Posterior vena cava (tissue), 2 donors: ENCODE measurements at regions of chr2 and their contacts with region 1.

Region 1: DNA sequence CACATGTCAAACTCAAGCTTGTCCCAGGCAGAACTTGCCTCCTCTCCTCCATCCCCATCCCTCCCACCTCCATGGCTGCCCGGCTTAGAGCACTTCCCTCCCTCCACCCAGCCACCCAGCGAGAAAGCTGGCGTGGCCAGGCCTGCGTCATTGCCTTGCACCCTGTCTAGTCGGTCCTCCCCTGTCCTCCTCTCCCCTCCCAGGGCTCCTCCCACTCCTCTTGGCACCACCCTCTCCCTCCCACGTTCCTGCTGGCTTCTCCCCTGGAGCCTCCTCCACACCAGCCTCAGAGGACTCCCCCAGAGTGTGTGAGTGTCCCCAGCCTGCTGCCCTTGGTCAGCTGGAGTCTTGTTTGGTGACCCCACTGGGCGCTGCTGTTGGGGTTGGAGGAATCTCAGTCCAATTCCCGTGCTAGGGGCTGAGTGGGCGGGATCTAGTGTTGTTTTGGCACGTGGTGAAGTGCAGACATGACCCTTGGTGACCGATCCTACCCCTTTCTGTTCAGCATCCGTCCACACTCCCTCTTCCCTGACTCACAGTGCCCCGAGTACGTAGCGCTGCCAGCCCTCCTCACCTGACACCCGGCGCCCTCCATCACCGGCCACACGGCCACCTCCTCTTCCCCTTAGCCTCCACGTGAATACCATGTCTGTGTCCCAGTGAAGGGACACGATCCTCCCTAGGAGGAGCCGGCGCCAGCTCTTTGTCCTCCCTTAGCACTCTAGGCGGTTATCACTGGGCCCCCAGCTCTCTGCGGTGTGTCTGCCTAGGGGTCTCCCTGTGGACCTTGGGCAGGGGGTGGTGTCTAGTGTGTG is 41.4 kb downstream of the ATP6V1C2 start:
- DNase-seq: peak; percentile 71

Region 2: GRCh38 chr2:9525266-9525665 is 1237.6 kb before region 1 on chr2:
- intact Hi-C with region 1: no loop called
- DNase-seq: no peak

Region 3: DNA sequence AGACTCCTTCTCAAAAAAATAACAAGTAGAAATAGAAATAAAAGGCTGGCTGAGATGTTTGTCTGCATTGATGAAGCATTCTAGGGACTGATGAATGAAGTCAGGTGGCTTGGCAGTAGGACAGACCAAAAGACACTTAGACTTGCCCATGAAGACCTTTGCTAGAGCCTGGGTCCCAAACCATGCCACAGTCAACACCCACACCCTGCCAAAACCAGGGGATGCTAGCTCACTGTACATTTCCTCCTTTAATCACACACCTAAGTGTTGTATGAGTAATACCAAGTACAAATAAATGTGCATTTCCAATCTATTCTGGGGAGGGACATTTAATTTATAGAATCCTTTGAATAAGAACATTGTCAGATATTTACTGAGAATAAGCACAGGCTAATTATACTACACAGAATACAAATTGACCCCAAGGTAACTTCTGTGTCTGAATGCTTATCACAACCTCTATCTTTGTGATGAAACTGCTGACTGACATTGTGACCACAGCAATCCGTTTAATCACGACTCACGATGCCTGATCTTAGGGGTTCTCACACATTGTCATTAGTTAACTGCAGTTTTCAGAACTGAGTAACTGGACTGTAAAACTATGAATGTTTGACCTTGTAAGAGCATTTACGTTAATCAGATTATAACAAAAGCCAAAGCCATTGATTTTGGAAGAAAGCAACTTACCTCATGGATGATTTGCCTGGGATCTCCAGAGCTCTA is 62.6 kb before region 1 on chr2:
- intact Hi-C with region 1: no loop called
- DNase-seq: no peak

Region 4: DNA sequence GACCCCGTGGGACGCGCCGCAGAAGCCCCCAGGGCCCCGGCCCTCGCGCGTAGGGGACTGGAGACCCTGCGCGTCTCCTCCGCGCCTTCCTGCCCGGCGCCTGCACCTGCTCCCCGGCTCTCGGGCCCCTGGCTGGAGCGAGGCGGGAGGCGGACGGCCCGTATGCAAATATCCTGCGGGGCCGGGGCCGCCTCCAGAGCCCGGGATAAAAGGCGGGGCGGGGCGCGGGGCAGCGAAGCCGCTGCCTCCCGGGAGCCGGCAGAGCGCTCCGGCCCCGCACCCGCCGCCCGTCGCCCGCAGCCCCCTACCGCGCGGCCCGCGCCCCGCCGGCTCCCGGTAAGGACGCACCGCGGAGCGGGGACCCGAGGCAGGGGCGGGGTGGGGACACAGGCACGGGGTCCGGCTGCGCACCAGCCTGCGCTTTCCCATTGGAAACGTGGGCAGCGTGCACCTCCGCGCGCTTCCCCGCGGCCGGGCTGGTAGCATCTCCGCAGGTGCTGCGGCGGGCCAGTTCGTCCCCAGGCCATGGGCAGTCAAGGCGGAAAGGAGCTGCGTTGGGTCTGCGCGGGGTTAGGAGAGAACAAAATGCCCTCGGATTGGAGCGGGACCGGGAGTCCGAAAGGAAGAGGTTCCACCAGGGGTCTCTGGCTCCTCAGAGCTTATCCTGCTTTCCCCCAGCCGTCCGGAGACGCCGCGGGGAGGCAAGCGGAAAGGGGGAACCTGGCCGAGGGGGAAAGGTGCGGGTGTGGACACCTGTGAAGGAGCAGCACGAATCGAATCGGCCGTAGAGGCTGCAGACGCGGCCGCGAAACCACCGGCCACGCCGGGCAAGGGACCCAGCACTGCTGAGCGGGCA is 41.2 kb before region 1 on chr2 and contains the start of gene ATP6V1C2:
- intact Hi-C with region 1: loop called in 1 of 2 experiments (anchors 1 kb)
- DNase-seq: no peak
- total RNA-seq, gene ATP6V1C2: 0.33 to 0.42 TPM

Region 5: GRCh38 chr2:11669454-11670291 is 906.8 kb after region 1 on chr2 and contains the start of gene NTSR2:
- intact Hi-C with region 1: no loop called
- DNase-seq: peak; percentile 79
- total RNA-seq, gene NTSR2: not detected